H1 (cell line): ENCODE measurements at regions of chr1 and their contacts with region 1.

Region 1: GRCh38 chr1:10794714-10795275 is 1.7 kb downstream of the CASZ1 start:
- DNase-seq: peak in 1 of 2 experiments; percentile 68
- H3K4me3 ChIP-seq: peak overlapping the region; percentile 50 to 82 (median 60)
- H3K27ac ChIP-seq: no peak overlapping the region
- H3K4me1 ChIP-seq: peaks cover 6 to 16% (median 11%) of the 10 kb centered on the region in 4 experiments
- H3K27me3 ChIP-seq: peaks cover 9 to 29% (median 23%) of the 10 kb centered on the region in 4 experiments; a peak in 6 of 7 replicates
- CTCF ChIP-seq: no peak
- EP300 ChIP-seq: no peak
- POLR2A ChIP-seq: no peak
- RAD21 ChIP-seq: no peak

Region 2: GRCh38 chr1:10867138-10867721 is 72.4 kb after region 1 on chr1:
- CTCF ChIA-PET with region 1: interaction called, 11 read pairs
- POLR2A ChIA-PET with region 1: no interaction called
- DNase-seq: peak in 1 of 2 experiments; percentile 90
- H3K4me3 ChIP-seq: peak overlapping the region; percentile 13 to 60 (median 23); a peak in 5 of 8 replicates
- H3K27ac ChIP-seq: no peak overlapping the region
- H3K4me1 ChIP-seq: peaks cover 2 to 14% (median 5%) of the 10 kb centered on the region in 4 experiments; a peak in 6 of 7 replicates
- H3K27me3 ChIP-seq: peaks cover 1 to 29% (median 9%) of the 10 kb centered on the region in 4 experiments; a peak in 6 of 7 replicates
- CTCF ChIP-seq: peak; percentile 56 to 76 (median 71)
- EP300 ChIP-seq: no peak
- POLR2A ChIP-seq: no peak
- RAD21 ChIP-seq: peak; percentile 44 to 85

Region 3: DNA sequence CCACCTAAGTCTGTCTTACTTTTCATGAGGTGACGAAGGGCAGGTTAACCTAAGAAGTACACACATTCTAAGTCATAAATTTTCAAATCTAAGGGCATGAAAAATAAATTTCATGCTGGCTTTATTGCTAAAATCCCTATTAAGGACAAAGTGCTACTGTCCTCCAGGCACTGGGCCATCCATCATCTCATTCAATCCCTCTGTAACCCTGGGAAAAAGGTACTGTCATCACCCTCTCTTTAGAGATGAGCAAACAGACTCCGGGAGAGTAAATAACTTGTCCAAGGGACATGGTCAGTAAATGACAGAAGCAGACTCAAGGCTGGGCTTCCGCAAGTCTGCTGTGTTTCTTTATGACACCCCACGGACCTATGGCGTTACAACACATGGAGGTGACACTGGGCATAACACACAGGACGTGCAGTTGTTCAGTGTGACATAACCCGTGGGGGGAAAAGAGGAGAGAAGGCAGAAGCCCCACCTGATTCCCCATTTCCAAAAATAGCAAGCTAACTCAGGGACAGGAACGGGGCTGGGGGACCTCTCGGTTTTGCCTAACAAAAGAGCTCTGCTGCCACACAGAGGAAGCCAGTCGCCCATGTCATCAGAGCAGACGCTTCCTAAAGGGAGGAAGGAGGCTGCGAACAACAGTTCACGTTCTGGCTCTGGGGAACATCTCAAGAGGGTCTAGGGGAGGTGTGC is 277.6 kb after region 1 on chr1:
- CTCF ChIA-PET with region 1: no interaction called
- POLR2A ChIA-PET with region 1: no interaction called
- DNase-seq: no peak
- H3K4me3 ChIP-seq: no peak overlapping the region
- H3K27ac ChIP-seq: no peak overlapping the region
- H3K4me1 ChIP-seq: no peaks in the 10 kb centered on the region
- H3K27me3 ChIP-seq: no peaks in the 10 kb centered on the region
- CTCF ChIP-seq: no peak
- EP300 ChIP-seq: no peak
- POLR2A ChIP-seq: no peak
- RAD21 ChIP-seq: peak; percentile 9 to 27; a peak in 2 of 4 replicates

Region 4: DNA sequence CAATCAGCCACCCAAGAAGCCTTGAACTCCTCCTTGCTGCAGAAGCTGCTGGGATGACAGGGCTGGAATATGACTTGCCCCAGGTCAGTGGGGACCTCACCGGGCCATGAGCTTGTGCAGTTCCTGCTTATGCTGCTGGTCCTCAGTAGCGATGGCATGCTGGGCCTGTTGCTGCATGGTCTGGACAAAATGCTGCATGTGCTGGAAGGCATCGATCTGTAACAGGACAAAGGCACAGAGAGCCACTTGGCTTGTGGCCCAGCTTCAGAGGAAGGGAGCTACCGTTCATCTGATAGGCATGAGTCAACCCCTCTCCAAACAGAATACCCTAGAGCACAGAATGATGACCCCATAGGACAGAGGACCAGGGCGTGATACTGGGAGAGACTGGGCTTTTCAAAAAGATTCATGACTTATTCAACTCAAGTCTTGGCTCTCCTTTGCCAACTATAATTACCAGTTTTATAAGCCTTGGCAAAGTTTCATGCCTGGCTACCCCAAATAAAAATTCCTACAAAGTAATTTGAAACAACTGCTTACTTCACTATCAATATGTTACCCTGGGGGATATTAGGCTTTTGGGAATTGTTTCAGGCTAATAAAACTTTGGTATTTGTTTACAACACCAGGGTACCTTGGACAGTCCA is 339.6 kb after region 1 on chr1:
- CTCF ChIA-PET with region 1: no interaction called
- POLR2A ChIA-PET with region 1: no interaction called
- DNase-seq: no peak
- H3K4me3 ChIP-seq: no peak overlapping the region
- H3K27ac ChIP-seq: no peak overlapping the region
- H3K4me1 ChIP-seq: no peaks in the 10 kb centered on the region
- H3K27me3 ChIP-seq: no peaks in the 10 kb centered on the region
- CTCF ChIP-seq: no peak
- EP300 ChIP-seq: no peak
- POLR2A ChIP-seq: no peak
- RAD21 ChIP-seq: no peak